Mammary epithelial cell (primary cell): ENCODE measurements at regions of chr2 and their contacts with region 1.

Region 1: DNA sequence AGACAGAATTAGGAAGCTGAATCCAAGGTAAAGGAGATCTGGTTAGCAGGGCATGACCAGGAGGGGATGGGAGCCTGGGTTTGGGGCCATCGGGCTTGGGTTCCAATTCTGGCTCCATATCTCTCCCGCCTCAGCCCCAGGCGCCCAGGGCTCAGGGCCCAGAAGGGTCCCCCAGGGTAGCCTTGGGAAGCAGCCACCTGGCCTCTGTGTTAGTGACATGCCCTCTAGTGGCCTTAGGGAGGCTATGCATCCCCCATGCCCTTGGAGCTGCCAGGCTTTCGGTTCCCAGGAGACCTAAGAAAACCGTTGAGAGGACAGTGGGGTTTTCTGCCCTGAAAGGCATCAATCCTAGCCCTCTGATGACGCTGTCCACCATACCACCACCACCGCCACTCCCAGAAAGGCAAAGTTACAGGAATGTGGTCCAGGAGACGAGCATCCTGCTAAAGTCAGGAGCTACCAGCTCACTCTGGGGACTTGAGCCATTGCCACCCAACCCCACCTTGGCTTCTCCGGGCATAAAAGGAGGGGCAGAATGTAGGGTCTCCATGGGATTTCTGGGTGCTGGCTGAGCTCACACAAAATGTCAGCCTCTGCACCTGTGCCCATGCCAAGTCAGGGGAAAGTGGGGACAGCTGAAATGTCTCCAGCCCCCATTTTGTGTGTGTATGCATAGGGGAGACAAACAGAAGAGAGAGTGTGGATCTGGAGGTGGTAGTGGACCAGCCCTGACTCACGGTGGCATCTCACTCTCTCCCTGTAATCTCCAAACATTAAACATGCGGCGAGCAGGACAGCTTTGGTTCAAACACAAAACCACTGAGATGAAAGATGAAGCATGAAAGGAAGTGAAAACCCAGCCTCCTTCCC is 56.5 kb downstream of the EMX1 start:
- DNase-seq: peak; percentile 32
- H3K4me3 ChIP-seq: no peak overlapping the region
- H3K27ac ChIP-seq: no peak overlapping the region
- H3K4me1 ChIP-seq: no peaks in the 10 kb centered on the region
- H3K27me3 ChIP-seq: no peaks in the 10 kb centered on the region
- CTCF ChIP-seq: peak; percentile 93 to 94

Region 2: GRCh38 chr2:73176881-73177644 is 203.3 kb after region 1 on chr2:
- CTCF ChIA-PET with region 1: no interaction called
- dilution Hi-C with region 1: no loop called
- in situ Hi-C with region 1: loop called in 1 of 2 experiments (anchors 25 kb)
- intact Hi-C with region 1: loop called (anchors 5 kb)
- DNase-seq: peak; percentile 64
- H3K4me3 ChIP-seq: peak overlapping the region; percentile 55 to 59 (median 55)
- H3K27ac ChIP-seq: no peak overlapping the region
- H3K4me1 ChIP-seq: peaks cover 27% of the 10 kb centered on the region
- H3K27me3 ChIP-seq: peaks cover 13% of the 10 kb centered on the region
- CTCF ChIP-seq: peak; percentile 64 to 93

Region 3: DNA sequence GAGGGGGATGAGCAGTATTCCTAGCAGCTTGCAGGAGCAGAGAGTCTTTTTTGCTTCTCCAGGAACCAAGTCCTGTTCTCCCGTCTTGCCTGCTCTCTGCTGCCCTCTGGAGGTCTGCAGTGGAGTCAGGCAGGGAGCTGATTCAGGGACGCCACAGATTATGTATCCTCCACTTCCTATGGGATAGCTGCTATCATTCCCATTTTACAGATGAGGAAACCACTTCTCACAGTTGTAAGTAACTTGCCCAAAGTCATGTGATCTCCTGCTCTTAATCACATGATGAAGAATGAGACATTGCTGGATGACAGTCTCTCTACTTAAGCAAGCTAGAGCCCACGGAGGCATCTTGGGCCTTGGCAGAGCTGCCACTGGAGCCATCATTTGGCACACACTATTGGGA is 1361.1 kb after region 1 on chr2:
- CTCF ChIA-PET with region 1: no interaction called
- dilution Hi-C with region 1: no loop called
- in situ Hi-C with region 1: no loop called
- intact Hi-C with region 1: no loop called
- DNase-seq: peak; percentile 49
- H3K4me3 ChIP-seq: no peak overlapping the region
- H3K27ac ChIP-seq: no peak overlapping the region
- H3K4me1 ChIP-seq: no peaks in the 10 kb centered on the region
- H3K27me3 ChIP-seq: no peaks in the 10 kb centered on the region
- CTCF ChIP-seq: peak; percentile 96 to 98